ENCODE measurements at regions of chr2 and their contacts with region 1.

Region 1: DNA sequence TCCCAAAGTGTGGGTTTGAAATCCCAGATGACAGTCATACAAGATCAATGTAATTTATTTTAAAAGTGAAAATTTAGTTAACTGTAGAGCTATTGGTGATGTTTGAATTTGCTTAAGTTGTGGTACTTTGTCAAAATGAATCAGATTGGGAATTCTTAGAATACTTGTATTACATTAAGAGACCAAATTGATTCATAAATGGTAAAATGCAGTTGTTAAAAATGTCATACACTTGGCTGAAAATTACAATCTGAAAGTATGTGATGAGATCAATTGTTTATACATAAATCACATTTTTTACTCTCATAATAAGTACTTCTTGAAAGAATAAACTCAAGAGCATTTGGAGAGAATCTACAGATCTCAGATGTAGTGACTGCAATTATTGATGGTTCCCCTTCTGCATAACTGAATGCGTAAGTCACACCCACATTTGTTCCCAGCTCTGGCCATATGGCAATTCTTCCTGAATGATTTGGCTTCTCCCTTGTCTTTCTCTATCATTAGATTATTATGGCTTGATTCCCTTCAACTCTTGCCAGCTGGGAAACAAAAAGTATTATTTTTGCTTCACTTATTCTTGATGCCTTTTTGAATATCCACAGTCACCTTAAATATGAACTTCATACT is 558.5 kb downstream of the CPS1 start:
- DNase-seq: no peak
- H3K4me3 Mint-ChIP-seq: no peak overlapping the region
- H3K27ac Mint-ChIP-seq: no peak overlapping the region
- H3K4me1 Mint-ChIP-seq: no peaks in the 10 kb centered on the region
- H3K27me3 Mint-ChIP-seq: no peaks in the 10 kb centered on the region

Region 2: DNA sequence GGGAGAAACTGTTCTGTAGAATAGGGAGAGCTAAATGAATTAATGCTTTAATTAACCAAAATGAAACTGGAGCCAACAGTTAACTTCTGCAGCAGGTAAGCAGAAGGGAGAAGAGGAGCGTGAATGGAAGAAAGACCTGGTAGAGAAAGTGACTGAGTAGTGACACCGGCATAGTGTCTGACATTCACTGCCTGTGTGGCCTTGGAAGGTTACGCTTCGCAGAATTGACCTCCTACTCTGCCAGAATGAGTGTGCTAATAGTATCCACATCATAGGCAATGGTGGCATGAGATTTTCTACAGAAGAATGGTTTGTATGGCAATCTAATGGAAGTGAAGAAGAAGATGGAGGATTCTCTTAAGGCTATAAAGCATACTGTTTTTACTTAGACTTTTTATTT is 55.9 kb after region 1 on chr2:
- CTCF ChIA-PET with region 1: no interaction called
- intact Hi-C with region 1: loop called (anchors 1 kb)
- DNase-seq: no peak
- H3K4me3 Mint-ChIP-seq: no peak overlapping the region
- H3K27ac Mint-ChIP-seq: no peak overlapping the region
- H3K4me1 Mint-ChIP-seq: no peaks in the 10 kb centered on the region
- H3K27me3 Mint-ChIP-seq: no peaks in the 10 kb centered on the region

Region 3: DNA sequence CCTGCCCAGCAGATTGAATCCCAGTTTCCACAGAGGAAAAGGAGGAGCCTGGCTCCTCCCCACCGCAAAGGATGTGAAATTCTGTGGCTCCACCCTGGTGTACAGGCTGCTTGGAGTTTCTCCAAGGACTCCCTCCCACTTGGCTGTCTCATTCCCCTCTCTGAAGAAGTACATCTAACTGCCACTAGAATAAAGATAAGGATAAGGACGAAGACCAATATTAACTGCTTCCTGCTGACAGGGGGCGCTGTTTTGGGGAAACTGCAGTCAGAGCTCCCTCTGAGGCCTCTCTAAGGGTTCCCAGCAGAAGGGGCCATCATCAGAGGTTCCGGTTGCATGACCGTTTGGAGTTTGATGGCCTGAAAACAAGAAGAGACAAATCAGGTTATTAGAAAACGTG is 232.4 kb after region 1 on chr2:
- CTCF ChIA-PET with region 1: no interaction called
- intact Hi-C with region 1: no loop called
- DNase-seq: no peak
- H3K4me3 Mint-ChIP-seq: no peak overlapping the region
- H3K27ac Mint-ChIP-seq: no peak overlapping the region
- H3K4me1 Mint-ChIP-seq: no peaks in the 10 kb centered on the region
- H3K27me3 Mint-ChIP-seq: no peaks in the 10 kb centered on the region

Measured in activated naive CD4-positive, alpha-beta T cell treated with anti-CD3 and anti-CD28 coated beads for 36 hours (primary cell).